ENCODE measurements at regions of chr9 and their contacts with region 1.

Region 1: GRCh38 chr9:131167146-131167692 is 41.8 kb downstream of the NUP214 start:
- DNase-seq: no peak
- H3K4me3 Mint-ChIP-seq: no peak overlapping the region
- H3K27ac Mint-ChIP-seq: peak overlapping the region; percentile 43
- H3K4me1 Mint-ChIP-seq: no peaks in the 10 kb centered on the region
- H3K27me3 Mint-ChIP-seq: no peaks in the 10 kb centered on the region
- CTCF ChIP-seq: no peak

Region 2: DNA sequence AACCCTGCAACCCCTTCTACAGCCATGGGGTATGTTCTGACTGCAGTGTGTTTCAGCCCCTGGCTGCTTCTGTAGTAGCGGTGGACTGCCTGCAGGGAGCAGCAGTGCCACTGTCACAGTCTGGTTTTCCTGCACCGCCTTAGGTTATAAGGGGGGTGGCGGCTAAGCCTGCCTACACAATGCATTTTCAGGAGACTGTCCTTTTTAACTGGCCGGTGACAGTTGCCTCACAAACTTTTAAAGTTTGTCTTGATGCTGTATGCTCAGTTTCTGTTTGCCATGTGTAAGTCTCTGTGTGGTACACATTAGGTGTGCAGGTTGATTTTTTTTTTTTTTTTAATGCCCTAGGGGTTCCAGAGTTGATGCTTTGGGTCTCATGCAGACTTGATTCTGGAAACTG is 11.2 kb after region 1 on chr9:
- CTCF ChIA-PET with region 1: interaction called, 19 read pairs
- POLR2A ChIA-PET with region 1: no interaction called
- intact Hi-C with region 1: no loop called
- DNase-seq: peak; percentile 57
- H3K4me3 Mint-ChIP-seq: no peak overlapping the region
- H3K27ac Mint-ChIP-seq: no peak overlapping the region
- H3K4me1 Mint-ChIP-seq: no peaks in the 10 kb centered on the region
- H3K27me3 Mint-ChIP-seq: no peaks in the 10 kb centered on the region
- CTCF ChIP-seq: peak; percentile 87